H1 (cell line): ENCODE measurements at regions of chr1 and their contacts with region 1.

Region 1: DNA sequence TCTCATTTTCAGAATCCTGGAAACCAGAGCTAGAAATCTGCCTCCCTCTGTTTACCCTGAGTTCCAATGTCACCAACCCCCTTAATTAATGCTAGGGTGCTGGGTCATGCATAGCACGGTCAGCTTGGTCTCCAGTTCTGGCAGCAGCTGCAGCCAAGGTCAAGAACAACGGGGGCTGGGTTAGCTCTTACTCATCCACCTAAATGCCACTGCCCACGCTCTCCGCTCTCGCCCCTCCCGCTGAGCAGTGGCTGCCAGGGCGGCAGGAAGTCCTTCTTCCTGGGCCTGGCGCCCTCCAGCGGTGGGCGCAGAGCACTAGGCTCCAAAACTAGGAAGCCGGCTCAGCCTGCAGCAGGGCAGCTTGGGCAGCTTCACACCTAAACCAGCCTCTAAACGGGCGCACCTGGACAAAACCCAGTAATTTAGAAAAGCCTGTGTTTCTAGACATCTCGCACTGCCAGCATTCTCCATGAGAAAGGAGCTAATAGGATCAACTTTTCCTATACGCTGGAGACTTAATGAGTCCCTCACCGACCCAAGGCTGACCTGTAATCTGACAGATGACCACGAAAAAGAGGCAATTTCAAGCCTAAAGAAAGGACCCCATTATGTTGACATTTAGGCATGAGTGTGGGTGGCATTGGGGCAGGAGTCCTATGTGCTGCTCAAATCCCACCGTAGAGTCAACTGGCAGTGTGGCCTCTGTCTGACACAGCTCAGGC is 78.3 kb upstream of the LRRN2 start:
- DNase-seq: peak; percentile 77 to 89
- H3K4me3 ChIP-seq: no peak overlapping the region
- H3K27ac ChIP-seq: no peak overlapping the region
- H3K4me1 ChIP-seq: peaks cover 0 to 5% (median 2%) of the 10 kb centered on the region in 4 experiments; a peak in 4 of 7 replicates
- H3K27me3 ChIP-seq: no peaks in the 10 kb centered on the region
- CTCF ChIP-seq: peak; percentile 93 to 98 (median 98)
- EP300 ChIP-seq: peak in 1 of 2 experiments; percentile 57; a peak in 1 of 3 replicates
- POLR2A ChIP-seq: no peak
- RAD21 ChIP-seq: peak; percentile 90 to 91

Region 2: GRCh38 chr1:204286831-204287421 is 476.9 kb before region 1 on chr1:
- CTCF ChIA-PET with region 1: no interaction called
- POLR2A ChIA-PET with region 1: no interaction called
- DNase-seq: no peak
- H3K4me3 ChIP-seq: 0 out of 8 replicates have a peak overlapping the region, but pooled peaks of 1 of the 4 experiments have one; percentile 42
- H3K27ac ChIP-seq: no peak overlapping the region
- H3K4me1 ChIP-seq: peaks cover 8 to 22% (median 16%) of the 10 kb centered on the region in 4 experiments
- H3K27me3 ChIP-seq: no peaks in the 10 kb centered on the region
- CTCF ChIP-seq: no peak
- EP300 ChIP-seq: no peak
- POLR2A ChIP-seq: no peak
- RAD21 ChIP-seq: no peak

Region 3: DNA sequence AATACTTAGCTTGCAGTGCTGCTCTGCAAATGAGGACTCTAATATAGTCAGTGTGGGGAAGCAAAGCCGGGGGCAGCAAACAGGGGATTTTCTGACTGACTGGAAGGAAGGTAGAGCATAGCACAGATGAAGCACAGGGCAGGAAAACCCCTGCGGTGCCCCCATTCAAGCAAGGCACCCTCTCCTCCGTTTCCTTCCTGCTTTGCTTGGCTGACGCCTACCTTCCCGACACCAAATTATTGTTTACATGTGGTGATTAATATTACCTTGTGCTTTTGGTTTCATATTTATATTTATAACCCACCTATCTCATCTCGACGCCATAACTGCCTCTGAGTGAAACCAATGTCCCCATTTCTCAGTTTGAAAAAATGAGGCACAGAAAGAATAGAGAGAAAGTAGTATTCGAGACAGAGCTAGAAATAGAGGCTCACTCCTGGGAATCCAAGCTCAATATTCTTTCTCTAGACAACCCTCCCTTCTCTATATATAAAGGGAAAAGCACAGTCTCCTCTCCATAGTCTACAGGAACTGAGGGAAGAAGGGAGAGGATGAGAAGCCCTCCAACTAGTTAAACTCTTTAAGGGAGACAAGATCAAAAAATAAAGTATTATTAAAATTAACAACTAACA is 310.6 kb before region 1 on chr1:
- CTCF ChIA-PET with region 1: no interaction called
- POLR2A ChIA-PET with region 1: no interaction called
- DNase-seq: no peak
- H3K4me3 ChIP-seq: no peak overlapping the region
- H3K27ac ChIP-seq: no peak overlapping the region
- H3K4me1 ChIP-seq: peaks cover 12 to 40% (median 23%) of the 10 kb centered on the region in 4 experiments
- H3K27me3 ChIP-seq: no peaks in the 10 kb centered on the region
- CTCF ChIP-seq: no peak
- EP300 ChIP-seq: no peak
- POLR2A ChIP-seq: no peak
- RAD21 ChIP-seq: no peak

Region 4: GRCh38 chr1:204591594-204592051 is 172.2 kb before region 1 on chr1:
- CTCF ChIA-PET with region 1: interaction called, 10 read pairs
- POLR2A ChIA-PET with region 1: no interaction called
- DNase-seq: no peak
- H3K4me3 ChIP-seq: no peak overlapping the region
- H3K27ac ChIP-seq: no peak overlapping the region
- H3K4me1 ChIP-seq: peaks cover 3 to 7% (median 5%) of the 10 kb centered on the region in 4 experiments; a peak in 5 of 7 replicates
- H3K27me3 ChIP-seq: no peaks in the 10 kb centered on the region
- CTCF ChIP-seq: no peak
- EP300 ChIP-seq: no peak
- POLR2A ChIP-seq: no peak
- RAD21 ChIP-seq: no peak

Region 5: DNA sequence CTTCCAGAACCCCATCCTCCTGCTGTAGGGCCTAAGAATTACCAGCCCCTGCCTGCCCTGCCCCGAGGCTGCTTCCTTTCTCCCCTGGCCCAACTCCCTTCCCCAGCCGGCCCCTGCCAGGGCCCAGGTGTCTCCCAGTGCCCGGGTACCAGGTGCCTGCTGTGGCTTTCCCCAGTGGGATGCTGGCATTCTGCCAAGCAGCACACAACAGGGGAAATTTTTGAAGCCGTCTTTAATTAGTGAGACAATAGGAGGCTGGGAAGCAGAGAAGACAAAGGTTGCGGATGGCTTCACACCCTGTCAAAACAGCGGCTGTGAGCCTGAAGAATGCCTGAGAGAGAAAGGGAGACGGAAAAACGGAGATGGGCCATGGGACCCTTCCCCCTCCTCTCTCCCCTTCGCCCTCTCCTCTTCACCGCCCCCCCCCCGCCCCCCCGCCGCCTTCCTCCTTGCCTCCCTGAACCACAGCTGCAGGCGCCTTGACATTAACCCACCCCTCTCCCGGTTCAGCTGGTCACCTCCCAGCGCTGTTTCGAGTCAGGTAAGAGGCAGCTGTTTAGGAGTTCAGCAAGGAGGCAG is 111.9 kb before region 1 on chr1:
- CTCF ChIA-PET with region 1: interaction called, 12 read pairs
- POLR2A ChIA-PET with region 1: no interaction called
- DNase-seq: peak; percentile 46 to 72
- H3K4me3 ChIP-seq: peak overlapping the region in 1 of 4 experiments; percentile 31; a peak in 2 of 8 replicates
- H3K27ac ChIP-seq: no peak overlapping the region
- H3K4me1 ChIP-seq: peaks cover 12 to 27% (median 16%) of the 10 kb centered on the region in 4 experiments
- H3K27me3 ChIP-seq: peaks cover 0 to 8% (median 0%) of the 10 kb centered on the region in 4 experiments; a peak in 2 of 7 replicates
- CTCF ChIP-seq: no peak
- EP300 ChIP-seq: no peak
- POLR2A ChIP-seq: no peak
- RAD21 ChIP-seq: no peak

Region 6: GRCh38 chr1:204685236-204686006 is 78.4 kb before region 1 on chr1 and contains the start of gene LRRN2:
- CTCF ChIA-PET with region 1: interaction called, 17 read pairs
- POLR2A ChIA-PET with region 1: no interaction called
- DNase-seq: peak in 1 of 2 experiments; percentile 66
- H3K4me3 ChIP-seq: peak within 1 kb of the TSS; percentile 43 to 66 (median 60)
- H3K27ac ChIP-seq: no peak within 1 kb of the TSS
- H3K4me1 ChIP-seq: peaks cover 0 to 12% (median 7%) of the 10 kb centered on the region in 4 experiments; a peak in 6 of 7 replicates
- H3K27me3 ChIP-seq: peaks cover 13 to 50% (median 44%) of the 10 kb centered on the region in 4 experiments
- CTCF ChIP-seq: no peak; a peak in 1 of 4 replicates
- EP300 ChIP-seq: no peak
- POLR2A ChIP-seq: no peak
- RAD21 ChIP-seq: no peak
- total RNA-seq, gene LRRN2: 2.3 and 2.5 TPM in 2 replicates

Region 7: DNA sequence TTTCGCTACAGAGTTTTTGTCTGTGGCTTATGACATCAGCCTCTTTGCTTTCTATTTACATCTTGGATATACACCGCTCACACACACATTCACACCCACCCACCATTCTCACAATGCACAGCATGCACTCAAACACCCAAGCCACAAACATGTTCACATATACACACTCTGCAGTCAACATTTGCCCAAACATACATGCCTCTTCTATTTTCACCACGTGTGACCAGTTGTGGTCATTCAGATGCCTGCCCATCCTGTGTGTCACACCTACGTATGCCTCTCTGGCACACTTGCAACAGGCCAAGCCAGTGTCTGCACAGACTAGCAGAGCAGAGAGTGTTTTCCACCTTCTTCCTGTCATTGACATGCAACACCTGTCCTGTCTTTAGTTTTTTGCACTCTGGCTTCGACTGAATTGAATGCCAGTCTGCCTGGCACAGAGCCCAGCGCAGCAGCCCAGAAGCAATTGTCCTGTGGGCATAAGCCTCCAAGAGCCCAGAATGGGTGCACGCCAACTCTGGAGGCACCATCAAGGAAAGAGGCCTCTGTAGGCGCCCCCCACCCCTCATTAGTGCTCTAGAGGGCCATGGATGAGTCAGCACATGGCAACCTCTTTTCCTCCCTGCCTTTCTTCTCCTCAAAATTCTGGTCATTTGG is 40.6 kb before region 1 on chr1:
- CTCF ChIA-PET with region 1: interaction called, 10 read pairs
- POLR2A ChIA-PET with region 1: no interaction called
- DNase-seq: peak in 1 of 2 experiments; percentile 23
- H3K4me3 ChIP-seq: no peak overlapping the region
- H3K27ac ChIP-seq: no peak overlapping the region
- H3K4me1 ChIP-seq: peaks cover 0 to 4% (median 1%) of the 10 kb centered on the region in 4 experiments; a peak in 2 of 7 replicates
- H3K27me3 ChIP-seq: peaks cover 0 to 2% (median 0%) of the 10 kb centered on the region in 4 experiments; a peak in 3 of 7 replicates
- CTCF ChIP-seq: no peak
- EP300 ChIP-seq: no peak
- POLR2A ChIP-seq: no peak
- RAD21 ChIP-seq: no peak

Region 8: DNA sequence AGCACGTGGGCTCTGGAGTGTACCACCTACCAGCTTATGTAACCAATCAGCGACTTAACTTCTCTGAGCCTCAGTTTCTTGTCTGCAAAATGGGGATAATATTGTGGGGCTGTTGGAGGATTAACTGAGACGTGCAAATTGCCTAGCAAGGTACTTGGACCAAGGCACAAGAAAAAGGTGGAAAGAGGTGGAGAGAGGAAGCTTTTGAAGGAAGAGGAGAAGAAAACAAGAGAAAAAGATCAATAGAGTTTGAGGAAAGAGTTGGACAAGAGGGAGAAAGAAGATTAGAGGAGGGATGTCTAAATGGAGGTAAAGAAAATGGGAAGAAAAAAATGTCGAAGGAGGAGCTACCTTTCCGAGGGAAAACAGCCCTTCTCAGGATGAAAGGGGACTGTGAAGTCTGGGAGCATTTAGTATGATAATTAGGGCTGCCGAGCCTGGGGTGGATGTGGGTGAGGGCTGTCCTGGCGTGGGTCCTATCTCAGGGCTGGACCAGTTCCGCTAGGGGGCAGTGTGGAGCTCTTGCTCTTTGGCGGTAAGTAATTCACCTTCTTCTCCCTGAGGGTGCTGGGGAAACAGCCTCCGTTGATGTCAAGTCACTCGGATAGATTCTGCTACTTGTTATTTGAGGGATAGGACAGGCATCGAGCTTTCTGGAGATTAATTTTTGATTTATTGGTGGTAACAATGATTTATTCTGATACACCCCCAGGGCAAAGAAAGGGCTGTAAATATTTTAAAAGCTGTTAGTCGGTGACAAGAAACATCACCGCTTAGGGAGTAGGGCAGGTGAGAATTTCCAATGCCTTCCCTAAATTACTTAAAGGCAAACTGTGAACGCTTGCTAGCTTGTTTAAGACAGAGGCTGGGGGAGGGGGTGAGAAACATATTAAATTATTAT is 27.8 kb after region 1 on chr1:
- CTCF ChIA-PET with region 1: interaction called, 32 read pairs
- POLR2A ChIA-PET with region 1: no interaction called
- DNase-seq: peak; percentile 79 to 95
- H3K4me3 ChIP-seq: no peak overlapping the region
- H3K27ac ChIP-seq: no peak overlapping the region
- H3K4me1 ChIP-seq: no peaks in the 10 kb centered on the region
- H3K27me3 ChIP-seq: no peaks in the 10 kb centered on the region; a peak in 2 of 7 replicates
- CTCF ChIP-seq: peak; percentile 79 to 95 (median 91)
- EP300 ChIP-seq: no peak
- POLR2A ChIP-seq: no peak
- RAD21 ChIP-seq: peak; percentile 47 to 62; a peak in 3 of 4 replicates

Region 9: DNA sequence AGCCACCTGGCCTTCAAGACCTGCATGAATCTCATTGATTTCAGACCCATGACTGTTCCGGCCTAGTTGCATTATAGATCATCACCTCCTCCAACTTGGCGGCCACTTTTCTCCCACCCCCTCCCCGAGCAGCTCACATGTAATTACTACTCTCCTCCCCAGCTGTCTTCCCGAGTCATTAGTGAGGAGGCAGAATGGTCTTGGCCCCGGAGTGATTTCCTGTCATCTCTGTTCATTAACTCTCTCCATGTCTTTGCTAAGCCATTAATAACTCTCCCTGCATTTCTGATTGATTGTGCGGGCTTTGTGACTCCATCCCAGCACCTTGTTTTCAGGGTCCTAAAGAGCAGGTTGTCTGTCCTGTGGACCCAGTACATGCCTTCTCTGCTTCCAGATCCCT is 203.6 kb after region 1 on chr1:
- CTCF ChIA-PET with region 1: no interaction called
- POLR2A ChIA-PET with region 1: no interaction called
- DNase-seq: no peak
- H3K4me3 ChIP-seq: no peak overlapping the region
- H3K27ac ChIP-seq: no peak overlapping the region
- H3K4me1 ChIP-seq: no peaks in the 10 kb centered on the region
- H3K27me3 ChIP-seq: no peaks in the 10 kb centered on the region
- CTCF ChIP-seq: no peak
- EP300 ChIP-seq: no peak
- POLR2A ChIP-seq: no peak
- RAD21 ChIP-seq: no peak

Region 10: GRCh38 chr1:205172729-205173366 is 409.0 kb after region 1 on chr1:
- CTCF ChIA-PET with region 1: no interaction called
- POLR2A ChIA-PET with region 1: no interaction called
- DNase-seq: no peak
- H3K4me3 ChIP-seq: no peak overlapping the region
- H3K27ac ChIP-seq: no peak overlapping the region
- H3K4me1 ChIP-seq: no peaks in the 10 kb centered on the region
- H3K27me3 ChIP-seq: no peaks in the 10 kb centered on the region
- CTCF ChIP-seq: no peak
- EP300 ChIP-seq: no peak
- POLR2A ChIP-seq: no peak
- RAD21 ChIP-seq: no peak